Left lung (tissue), 14 donors: ENCODE measurements at regions of chr1 and their contacts with region 1.

Region 1: DNA sequence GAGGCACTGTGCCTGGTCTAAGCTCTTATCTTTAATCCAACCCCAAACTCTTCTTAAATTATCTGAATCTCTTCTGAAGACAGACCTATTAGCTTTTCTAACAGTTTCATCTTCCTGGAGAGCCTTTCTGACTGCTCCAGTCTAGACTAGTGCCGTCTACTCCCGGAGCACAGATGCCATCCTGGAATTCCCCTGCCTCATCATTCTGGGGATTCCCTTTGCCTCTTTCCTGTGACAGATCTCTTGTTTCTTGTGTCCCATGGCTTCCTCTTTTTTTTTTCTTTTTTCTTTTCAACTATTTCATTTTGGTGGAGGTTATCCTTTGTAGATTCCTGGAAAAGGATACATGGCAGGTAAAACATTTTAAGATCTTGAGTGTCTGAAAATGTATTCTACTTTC is 11.7 kb downstream of the SEMA4A start:
- DNase-seq: no peak
- ATAC-seq: no peak
- H3K4me3 ChIP-seq: no peak overlapping the region
- H3K27ac ChIP-seq: peak overlapping the region in 1 of 2 donors; percentile 18
- H3K4me1 ChIP-seq: peaks cover 11 to 47% of the 10 kb centered on the region in 2 donors
- H3K27me3 ChIP-seq: no peaks in the 10 kb centered on the region
- CTCF ChIP-seq: no peak

Region 2: GRCh38 chr1:156198831-156199349 is 33.8 kb after region 1 on chr1:
- intact Hi-C with region 1: loop called in 1 of 2 experiments (anchors 2 kb)
- DNase-seq: no peak
- ATAC-seq: no peak
- H3K4me3 ChIP-seq: no peak overlapping the region
- H3K27ac ChIP-seq: no peak overlapping the region
- H3K4me1 ChIP-seq: peaks cover 5 to 76% of the 10 kb centered on the region in 2 donors
- H3K27me3 ChIP-seq: no peaks in the 10 kb centered on the region
- CTCF ChIP-seq: no peak